ENCODE measurements at regions of chr18 and their contacts with region 1.

Region 1: DNA sequence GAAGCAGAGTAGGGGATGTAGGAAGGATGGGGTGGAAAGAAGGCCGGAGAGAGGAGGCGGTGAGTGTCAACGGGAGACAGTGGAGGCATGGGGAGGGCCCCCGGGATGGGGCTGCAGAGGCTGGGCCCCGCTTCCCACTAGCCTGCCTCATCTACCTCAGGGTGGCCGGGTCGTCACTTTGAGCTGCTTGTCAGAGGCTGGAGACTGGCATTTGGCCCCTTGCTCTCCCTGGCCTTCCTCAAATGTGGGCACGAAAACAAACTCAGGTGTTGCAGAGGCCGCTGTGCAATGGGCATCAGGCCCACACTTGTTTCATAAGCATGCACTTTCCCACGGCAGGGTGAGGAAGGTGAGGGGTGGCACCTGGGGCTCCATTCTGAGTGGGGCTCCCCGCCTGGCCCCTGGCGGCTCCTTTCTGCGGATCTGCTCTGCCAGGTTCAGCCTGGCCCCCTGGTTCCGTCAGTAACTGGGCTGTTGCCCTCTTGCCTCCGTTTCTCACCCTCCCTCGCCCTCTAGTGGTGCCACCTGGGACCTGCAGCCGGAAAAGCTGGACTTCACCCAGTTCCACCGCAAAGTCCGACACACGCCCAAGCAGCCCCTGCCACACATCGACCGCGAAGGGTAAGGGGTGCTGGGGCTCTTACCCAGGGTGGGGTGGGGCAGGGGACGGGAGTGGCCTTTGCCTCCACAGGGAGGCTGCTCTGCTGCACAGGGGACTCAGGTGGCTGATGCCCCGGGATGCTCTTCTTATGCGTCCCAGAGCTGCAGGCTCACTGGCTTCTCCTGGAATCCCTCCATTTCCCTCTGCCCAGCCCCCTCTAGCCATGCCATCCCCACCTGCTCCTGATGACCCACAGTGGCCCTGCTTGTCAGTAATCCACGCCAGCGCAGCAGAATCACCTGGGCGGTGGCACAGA is 125.4 kb downstream of the CTIF start:
- DNase-seq: peak; percentile 65
- H3K4me3 Mint-ChIP-seq: no peak overlapping the region
- H3K27ac Mint-ChIP-seq: no peak overlapping the region
- H3K4me1 Mint-ChIP-seq: no peaks in the 10 kb centered on the region
- H3K27me3 Mint-ChIP-seq: no peaks in the 10 kb centered on the region

Region 2: DNA sequence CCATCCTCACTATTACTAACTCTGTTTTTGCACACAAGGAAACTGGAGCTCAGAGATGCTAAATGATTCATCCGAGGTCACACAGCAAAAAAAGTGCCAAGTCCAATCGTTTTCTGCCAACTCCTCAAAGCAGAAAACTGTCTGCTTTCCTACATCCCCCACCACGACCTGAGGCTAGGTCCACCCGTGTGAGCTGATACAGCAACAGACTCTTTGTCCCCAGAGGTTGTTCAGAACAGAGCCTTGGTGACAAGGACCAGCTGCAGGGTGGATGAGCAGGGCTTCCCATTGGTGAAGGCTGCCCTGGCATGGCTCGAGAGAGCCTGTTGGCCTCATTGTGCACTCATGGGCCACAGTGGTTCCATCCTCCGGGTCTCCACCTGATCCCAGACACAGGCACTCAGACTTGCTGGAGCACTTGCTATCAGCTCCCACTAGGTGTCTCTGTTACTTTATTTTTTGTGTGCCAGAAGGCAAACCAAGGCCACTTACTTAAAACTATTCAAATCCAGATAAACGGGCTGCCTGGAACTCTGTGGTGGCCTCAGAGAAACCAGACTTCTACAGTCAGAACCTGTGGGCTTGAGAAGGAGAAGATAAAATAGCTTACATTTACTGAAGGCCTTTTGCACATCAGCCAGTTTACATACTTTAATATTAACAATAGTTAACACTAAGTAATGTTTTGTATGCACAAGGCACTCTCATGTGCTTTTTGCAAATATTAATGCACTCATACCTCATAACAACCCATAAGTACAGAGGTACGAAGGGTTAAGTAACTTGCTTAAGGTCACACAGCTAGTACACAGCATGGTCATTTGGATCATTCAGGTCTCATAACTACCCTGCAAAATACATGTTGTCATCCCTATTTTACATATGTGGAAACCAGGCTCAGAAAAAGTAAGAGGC is 188.3 kb before region 1 on chr18:
- CTCF ChIA-PET with region 1: interaction called, 6 read pairs
- intact Hi-C with region 1: loop called (anchors 1 kb)
- DNase-seq: peak; percentile 34
- H3K4me3 Mint-ChIP-seq: no peak overlapping the region
- H3K27ac Mint-ChIP-seq: no peak overlapping the region
- H3K4me1 Mint-ChIP-seq: no peaks in the 10 kb centered on the region
- H3K27me3 Mint-ChIP-seq: peaks cover 26% of the 10 kb centered on the region

Region 3: GRCh38 chr18:48639772-48640432 is 24.3 kb before region 1 on chr18:
- CTCF ChIA-PET with region 1: no interaction called
- intact Hi-C with region 1: no loop called
- DNase-seq: no peak
- H3K4me3 Mint-ChIP-seq: no peak overlapping the region
- H3K27ac Mint-ChIP-seq: no peak overlapping the region
- H3K4me1 Mint-ChIP-seq: no peaks in the 10 kb centered on the region
- H3K27me3 Mint-ChIP-seq: peaks cover 2% of the 10 kb centered on the region

Region 4: GRCh38 chr18:48680339-48681221 is 16.4 kb after region 1 on chr18:
- CTCF ChIA-PET with region 1: no interaction called
- intact Hi-C with region 1: no loop called
- DNase-seq: no peak
- H3K4me3 Mint-ChIP-seq: no peak overlapping the region
- H3K27ac Mint-ChIP-seq: no peak overlapping the region
- H3K4me1 Mint-ChIP-seq: no peaks in the 10 kb centered on the region
- H3K27me3 Mint-ChIP-seq: no peaks in the 10 kb centered on the region